Activated CD4-positive, alpha-beta memory T cell treated with anti-CD3 and anti-CD28 coated beads for 36 hours (primary cell): ENCODE measurements at regions of chr9 and their contacts with region 1.

Region 1: GRCh38 chr9:91346652-91347051 is 15.1 kb downstream of the AUH start:
- DNase-seq: no peak
- H3K4me3 Mint-ChIP-seq: no peak overlapping the region
- H3K27ac Mint-ChIP-seq: no peak overlapping the region
- H3K4me1 Mint-ChIP-seq: peaks cover 57% of the 10 kb centered on the region
- H3K27me3 Mint-ChIP-seq: no peaks in the 10 kb centered on the region

Region 2: DNA sequence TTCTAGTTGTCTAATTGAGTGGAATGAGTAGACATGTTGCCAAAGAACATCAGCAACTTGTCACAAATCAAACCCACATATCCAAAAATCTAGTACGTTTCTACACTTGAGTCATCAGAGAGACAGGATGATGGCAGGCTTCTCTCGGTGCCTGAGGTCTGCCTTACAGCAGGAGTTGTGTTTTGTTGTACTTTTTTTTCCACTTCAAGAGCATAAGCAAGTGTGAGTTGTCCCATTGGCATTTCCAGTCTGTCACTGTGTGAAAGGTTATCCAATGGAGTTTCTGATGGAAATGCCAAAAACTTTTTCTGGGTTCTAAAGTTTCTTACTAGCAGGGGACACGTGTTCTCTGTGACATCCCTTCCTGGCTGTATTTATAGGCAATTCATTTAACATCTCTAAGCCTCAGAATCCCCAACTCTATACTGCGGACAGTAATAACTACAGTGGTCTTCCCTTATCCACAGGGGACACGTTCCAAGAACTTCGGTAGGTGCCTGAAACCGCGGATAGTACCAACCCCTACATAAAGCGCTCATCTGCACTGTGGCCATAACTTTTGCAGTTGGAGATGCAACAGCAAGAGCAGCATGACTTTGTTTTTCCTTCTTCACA is 298.6 kb before region 1 on chr9:
- CTCF ChIA-PET with region 1: no interaction called
- POLR2A ChIA-PET with region 1: no interaction called
- intact Hi-C with region 1: loop called (anchors 2 kb)
- DNase-seq: peak; percentile 73
- H3K4me3 Mint-ChIP-seq: no peak overlapping the region
- H3K27ac Mint-ChIP-seq: peak overlapping the region; percentile 83
- H3K4me1 Mint-ChIP-seq: peaks cover 58% of the 10 kb centered on the region
- H3K27me3 Mint-ChIP-seq: peaks cover 40% of the 10 kb centered on the region

Region 3: DNA sequence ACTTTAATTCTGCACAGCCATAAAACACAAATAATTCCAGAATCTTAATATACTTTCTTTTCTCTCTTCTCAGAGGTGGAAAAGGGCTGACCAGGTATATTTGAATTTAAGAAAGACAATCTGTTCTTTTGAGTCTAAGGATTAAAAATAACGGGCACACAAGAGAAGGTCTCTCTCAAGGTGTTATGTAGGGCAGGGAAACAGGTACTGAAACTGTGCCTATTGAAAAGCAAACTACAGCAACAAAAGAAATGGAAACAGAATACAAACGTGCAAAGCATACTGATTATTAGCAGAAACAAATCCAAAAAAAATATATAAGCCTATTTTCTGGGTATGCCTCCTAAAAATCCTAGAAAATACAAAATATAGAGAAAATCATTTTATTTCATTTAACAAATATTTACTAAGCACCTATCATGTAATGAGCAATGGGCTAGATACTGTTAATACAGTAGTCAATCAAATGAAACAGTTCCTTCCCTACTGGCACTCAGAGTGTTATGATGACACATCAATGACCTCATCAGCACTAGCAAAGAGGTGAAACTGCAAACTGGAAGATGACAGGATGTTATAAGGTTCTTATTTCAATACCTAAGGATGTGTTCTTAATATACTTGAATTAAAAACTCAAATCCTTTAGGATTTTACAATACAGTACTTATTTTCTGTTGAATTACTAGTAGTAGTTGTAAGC is 72.6 kb before region 1 on chr9:
- CTCF ChIA-PET with region 1: no interaction called
- POLR2A ChIA-PET with region 1: no interaction called
- intact Hi-C with region 1: no loop called
- DNase-seq: no peak
- H3K4me3 Mint-ChIP-seq: no peak overlapping the region
- H3K27ac Mint-ChIP-seq: no peak overlapping the region
- H3K4me1 Mint-ChIP-seq: peaks cover 22% of the 10 kb centered on the region
- H3K27me3 Mint-ChIP-seq: no peaks in the 10 kb centered on the region

Region 4: DNA sequence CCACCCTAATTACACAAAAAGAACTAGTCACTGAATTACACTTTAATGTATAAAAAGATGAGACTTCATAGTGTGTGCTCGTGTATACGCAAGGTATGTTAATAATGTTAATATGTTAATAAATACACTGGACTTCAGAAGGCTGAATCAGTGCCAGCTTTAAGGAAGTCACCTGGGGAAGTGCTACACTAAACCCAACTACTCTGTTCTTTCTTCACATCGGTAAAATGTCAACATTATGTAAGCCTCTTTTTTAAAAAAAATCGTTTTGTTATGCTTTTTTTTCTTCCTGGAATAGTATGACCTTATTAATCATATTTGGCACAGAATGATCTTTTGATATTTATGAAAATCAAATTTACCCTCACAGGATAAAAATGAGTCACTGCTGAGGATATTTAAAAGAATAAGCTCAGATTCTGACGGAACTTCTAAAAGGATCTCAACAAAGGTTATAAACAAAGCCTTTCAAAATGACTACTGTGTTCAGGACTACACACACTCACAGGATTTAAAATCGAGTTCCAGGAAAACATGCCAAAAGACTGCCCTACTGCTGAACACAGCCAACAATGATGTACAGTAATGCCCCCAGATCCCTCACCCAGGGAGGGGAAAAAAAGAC is 60.8 kb before region 1 on chr9:
- CTCF ChIA-PET with region 1: interaction called, 3 read pairs
- POLR2A ChIA-PET with region 1: no interaction called
- intact Hi-C with region 1: loop called (anchors 2 kb)
- DNase-seq: no peak
- H3K4me3 Mint-ChIP-seq: no peak overlapping the region
- H3K27ac Mint-ChIP-seq: peak overlapping the region; percentile 78
- H3K4me1 Mint-ChIP-seq: peaks cover 19% of the 10 kb centered on the region
- H3K27me3 Mint-ChIP-seq: no peaks in the 10 kb centered on the region

Region 5: DNA sequence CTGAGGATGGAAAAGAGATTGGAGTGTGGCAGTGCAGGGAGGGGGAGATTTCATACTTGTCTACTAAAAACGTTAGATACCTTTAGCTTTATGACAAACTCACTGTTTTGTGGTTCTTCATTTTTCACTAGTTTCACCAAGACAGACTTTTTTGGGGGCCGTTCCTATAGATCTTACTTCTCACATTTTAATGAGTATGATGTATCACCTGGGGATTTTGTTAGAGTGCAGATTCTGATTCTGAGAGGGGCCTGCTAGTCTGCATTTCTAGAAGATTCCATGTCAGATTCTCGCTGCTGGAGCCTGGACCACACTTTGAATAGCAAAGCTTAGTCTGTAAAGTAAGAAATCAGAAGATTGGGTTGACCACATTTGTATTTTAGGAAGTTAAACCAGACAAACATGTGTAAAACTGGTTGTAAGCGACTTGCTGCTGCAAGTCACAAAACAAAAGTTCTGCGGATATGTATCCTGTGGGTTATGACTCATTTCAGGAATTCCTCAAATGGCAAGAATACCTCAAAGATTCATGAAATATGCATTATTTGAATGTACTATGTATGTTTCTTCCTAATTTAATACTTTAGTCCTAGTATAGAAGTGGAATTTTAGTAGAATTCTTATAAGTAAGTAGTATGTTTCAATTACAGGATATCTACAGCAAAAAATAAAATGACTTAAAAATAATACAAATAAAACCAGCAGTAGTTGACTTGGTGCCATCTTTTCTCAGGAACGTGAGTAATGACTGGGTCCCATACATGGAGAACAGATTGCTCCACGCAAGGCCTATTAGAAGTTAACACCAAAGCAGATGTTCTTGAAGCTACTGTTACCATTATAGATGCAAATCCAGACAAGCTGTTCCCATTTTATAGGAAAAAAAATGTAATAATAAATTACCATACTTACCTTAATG is 49.2 kb after region 1 on chr9:
- CTCF ChIA-PET with region 1: no interaction called
- POLR2A ChIA-PET with region 1: interaction called, 6 read pairs
- intact Hi-C with region 1: loop called (anchors 1 kb)
- DNase-seq: peak; percentile 44
- H3K4me3 Mint-ChIP-seq: peak overlapping the region; percentile 19
- H3K27ac Mint-ChIP-seq: peak overlapping the region; percentile 78
- H3K4me1 Mint-ChIP-seq: peaks cover 19% of the 10 kb centered on the region
- H3K27me3 Mint-ChIP-seq: peaks cover 15% of the 10 kb centered on the region

Region 6: GRCh38 chr9:91415290-91415689 is 68.6 kb after region 1 on chr9:
- CTCF ChIA-PET with region 1: interaction called, 5 read pairs
- POLR2A ChIA-PET with region 1: no interaction called
- intact Hi-C with region 1: loop called (anchors 1 kb)
- DNase-seq: peak; percentile 49
- H3K4me3 Mint-ChIP-seq: peak overlapping the region; percentile 26
- H3K27ac Mint-ChIP-seq: peak overlapping the region; percentile 86
- H3K4me1 Mint-ChIP-seq: peaks cover 80% of the 10 kb centered on the region
- H3K27me3 Mint-ChIP-seq: peaks cover 5% of the 10 kb centered on the region